Common myeloid progenitor, CD34-positive (primary cell): ENCODE measurements at regions of chr3 and their contacts with region 1.

Region 1: GRCh38 chr3:184786280-184786941 is 25.6 kb upstream of the VPS8 start:
- DNase-seq: peak; percentile 70 to 87 (median 85)
- H3K4me3 ChIP-seq: peak overlapping the region in 4 of 7 experiments; percentile 28 to 42 (median 33)
- H3K27ac ChIP-seq: no peak overlapping the region
- H3K4me1 ChIP-seq: peaks cover 17 to 39% (median 29%) of the 10 kb centered on the region in 4 experiments
- H3K27me3 ChIP-seq: no peaks in the 10 kb centered on the region

Region 2: GRCh38 chr3:184543843-184544512 is 242.4 kb before region 1 on chr3:
- CTCF ChIA-PET with region 1: no interaction called
- POLR2A ChIA-PET with region 1: no interaction called
- DNase-seq: peak; percentile 85 to 93 (median 89)
- H3K4me3 ChIP-seq: peak overlapping the region in 1 of 7 experiments; percentile 45
- H3K27ac ChIP-seq: no peak overlapping the region
- H3K4me1 ChIP-seq: peaks cover 0 to 12% (median 3%) of the 10 kb centered on the region in 4 experiments
- H3K27me3 ChIP-seq: peaks cover 0 to 8% (median 3%) of the 10 kb centered on the region in 5 experiments

Region 3: DNA sequence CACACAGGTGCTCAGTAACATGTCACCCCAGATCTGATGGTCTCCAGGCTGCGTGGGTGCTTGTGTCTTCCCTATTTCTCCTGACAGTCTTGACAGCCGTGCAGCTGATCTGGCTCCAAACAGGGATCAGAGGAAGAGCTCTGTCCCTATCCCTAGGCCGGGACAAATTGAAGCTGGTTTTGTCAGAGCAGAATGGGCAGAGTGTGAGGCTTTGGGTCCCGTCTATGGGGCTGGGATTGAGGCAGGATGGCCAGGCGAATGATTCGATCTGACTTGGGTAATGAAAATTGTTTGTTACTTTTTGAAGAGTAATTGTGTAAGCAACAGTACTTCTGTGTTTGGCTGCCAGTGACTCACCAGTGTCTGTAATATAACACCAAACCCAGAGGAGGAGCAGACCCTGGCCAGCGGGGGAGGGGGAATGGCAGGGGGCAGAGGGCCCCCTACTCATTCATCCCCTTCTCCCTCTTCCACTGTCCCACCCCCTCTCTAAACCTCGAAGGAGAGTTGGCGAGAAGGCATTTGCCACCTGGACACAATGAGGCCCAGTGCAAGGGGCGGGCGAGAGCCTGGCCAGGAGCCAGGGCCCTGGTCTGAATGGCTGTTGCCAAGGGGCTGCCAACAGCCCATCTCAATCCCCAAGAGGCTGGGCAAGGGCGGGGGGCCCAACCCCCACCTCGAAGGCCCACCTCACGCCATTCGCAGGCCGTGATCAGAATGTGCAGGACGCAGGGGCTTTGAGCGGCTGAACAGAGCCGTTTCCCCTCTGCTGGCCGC is 69.6 kb before region 1 on chr3:
- CTCF ChIA-PET with region 1: no interaction called
- POLR2A ChIA-PET with region 1: no interaction called
- DNase-seq: no peak
- H3K4me3 ChIP-seq: no peak overlapping the region
- H3K27ac ChIP-seq: no peak overlapping the region
- H3K4me1 ChIP-seq: peaks cover 0 to 23% (median 7%) of the 10 kb centered on the region in 4 experiments
- H3K27me3 ChIP-seq: no peaks in the 10 kb centered on the region

Region 4: GRCh38 chr3:184800349-184800930 is 14.0 kb after region 1 on chr3:
- CTCF ChIA-PET with region 1: interaction called, 47 read pairs
- POLR2A ChIA-PET with region 1: interaction called, 4 read pairs
- DNase-seq: no peak
- H3K4me3 ChIP-seq: no peak overlapping the region
- H3K27ac ChIP-seq: no peak overlapping the region
- H3K4me1 ChIP-seq: peaks cover 2 to 16% (median 6%) of the 10 kb centered on the region in 4 experiments
- H3K27me3 ChIP-seq: no peaks in the 10 kb centered on the region